ENCODE measurements at regions of chr2 and their contacts with region 1.

Region 1: GRCh38 chr2:54899576-54900200 is 150.6 kb downstream of the RTN4 start:
- DNase-seq: no peak
- ATAC-seq: peak; percentile 37 to 63 (median 47)
- H3K4me3 ChIP-seq: no peak overlapping the region
- H3K27ac ChIP-seq: peak overlapping the region; percentile 64
- H3K4me1 ChIP-seq: peaks cover 35% of the 10 kb centered on the region
- H3K27me3 ChIP-seq: no peaks in the 10 kb centered on the region
- CTCF ChIP-seq: peak; percentile 59

Region 2: GRCh38 chr2:54704688-54705605 is 194.7 kb before region 1 on chr2:
- intact Hi-C with region 1: no loop called
- DNase-seq: no peak
- ATAC-seq: peak; percentile 44 to 91 (median 74)
- H3K4me3 ChIP-seq: no peak overlapping the region
- H3K27ac ChIP-seq: no peak overlapping the region
- H3K4me1 ChIP-seq: no peaks in the 10 kb centered on the region
- H3K27me3 ChIP-seq: peaks cover 0 to 9% (median 4%) of the 10 kb centered on the region in 3 donors
- CTCF ChIP-seq: peak; percentile 62

Region 3: GRCh38 chr2:54845514-54845913 is 54.2 kb before region 1 on chr2:
- intact Hi-C with region 1: no loop called
- DNase-seq: no peak
- ATAC-seq: no peak
- H3K4me3 ChIP-seq: no peak overlapping the region
- H3K27ac ChIP-seq: no peak overlapping the region
- H3K4me1 ChIP-seq: no peaks in the 10 kb centered on the region
- H3K27me3 ChIP-seq: no peaks in the 10 kb centered on the region
- CTCF ChIP-seq: no peak

Region 4: GRCh38 chr2:54879598-54880332 is 19.9 kb before region 1 on chr2:
- intact Hi-C with region 1: no loop called
- DNase-seq: no peak
- ATAC-seq: peak; percentile 64 to 78 (median 70)
- H3K4me3 ChIP-seq: peak overlapping the region; percentile 15
- H3K27ac ChIP-seq: peak overlapping the region; percentile 53
- H3K4me1 ChIP-seq: peaks cover 10% of the 10 kb centered on the region
- H3K27me3 ChIP-seq: no peaks in the 10 kb centered on the region
- CTCF ChIP-seq: no peak

Region 5: DNA sequence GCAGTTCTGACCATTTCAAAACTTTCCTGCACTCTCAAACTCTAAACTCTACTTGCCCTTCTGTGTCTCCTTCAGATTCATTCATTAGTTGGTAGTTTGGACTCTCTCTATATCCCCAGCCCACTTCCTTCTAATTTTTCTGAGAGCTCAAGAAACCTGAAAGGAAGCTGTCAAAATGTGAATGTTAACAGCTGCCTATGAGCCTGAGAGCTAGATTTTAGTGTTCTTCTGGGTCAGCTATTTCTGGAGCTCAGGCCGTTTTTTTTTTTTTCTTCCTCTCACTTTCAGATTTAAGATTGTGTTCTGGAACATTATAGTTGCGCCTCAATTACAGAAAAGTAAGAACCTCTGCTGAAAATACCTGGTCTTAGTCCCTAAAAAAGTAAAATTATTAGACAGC is 77.5 kb after region 1 on chr2:
- intact Hi-C with region 1: loop called (anchors 5 to 10 kb)
- DNase-seq: no peak
- ATAC-seq: peak in 1 of 4 donors; percentile 16
- H3K4me3 ChIP-seq: peak overlapping the region; percentile 36
- H3K27ac ChIP-seq: peak overlapping the region; percentile 95
- H3K4me1 ChIP-seq: peaks cover 89% of the 10 kb centered on the region
- H3K27me3 ChIP-seq: no peaks in the 10 kb centered on the region
- CTCF ChIP-seq: no peak

Region 6: GRCh38 chr2:55010149-55010591 is 110.5 kb after region 1 on chr2:
- intact Hi-C with region 1: loop called (anchors 1 to 2 kb)
- DNase-seq: peak; percentile 33 to 70
- ATAC-seq: peak; percentile 85 to 89 (median 88)
- H3K4me3 ChIP-seq: peak overlapping the region; percentile 72
- H3K27ac ChIP-seq: peak overlapping the region; percentile 95
- H3K4me1 ChIP-seq: peaks cover 49% of the 10 kb centered on the region
- H3K27me3 ChIP-seq: no peaks in the 10 kb centered on the region
- CTCF ChIP-seq: no peak

Region 7: GRCh38 chr2:55014962-55015939 is 115.6 kb after region 1 on chr2:
- intact Hi-C with region 1: loop called (anchors 1 to 2 kb)
- DNase-seq: no peak
- ATAC-seq: peak; percentile 69 to 79 (median 72)
- H3K4me3 ChIP-seq: no peak overlapping the region
- H3K27ac ChIP-seq: peak overlapping the region; percentile 95
- H3K4me1 ChIP-seq: peaks cover 38% of the 10 kb centered on the region
- H3K27me3 ChIP-seq: no peaks in the 10 kb centered on the region
- CTCF ChIP-seq: peak; percentile 71

Region 8: DNA sequence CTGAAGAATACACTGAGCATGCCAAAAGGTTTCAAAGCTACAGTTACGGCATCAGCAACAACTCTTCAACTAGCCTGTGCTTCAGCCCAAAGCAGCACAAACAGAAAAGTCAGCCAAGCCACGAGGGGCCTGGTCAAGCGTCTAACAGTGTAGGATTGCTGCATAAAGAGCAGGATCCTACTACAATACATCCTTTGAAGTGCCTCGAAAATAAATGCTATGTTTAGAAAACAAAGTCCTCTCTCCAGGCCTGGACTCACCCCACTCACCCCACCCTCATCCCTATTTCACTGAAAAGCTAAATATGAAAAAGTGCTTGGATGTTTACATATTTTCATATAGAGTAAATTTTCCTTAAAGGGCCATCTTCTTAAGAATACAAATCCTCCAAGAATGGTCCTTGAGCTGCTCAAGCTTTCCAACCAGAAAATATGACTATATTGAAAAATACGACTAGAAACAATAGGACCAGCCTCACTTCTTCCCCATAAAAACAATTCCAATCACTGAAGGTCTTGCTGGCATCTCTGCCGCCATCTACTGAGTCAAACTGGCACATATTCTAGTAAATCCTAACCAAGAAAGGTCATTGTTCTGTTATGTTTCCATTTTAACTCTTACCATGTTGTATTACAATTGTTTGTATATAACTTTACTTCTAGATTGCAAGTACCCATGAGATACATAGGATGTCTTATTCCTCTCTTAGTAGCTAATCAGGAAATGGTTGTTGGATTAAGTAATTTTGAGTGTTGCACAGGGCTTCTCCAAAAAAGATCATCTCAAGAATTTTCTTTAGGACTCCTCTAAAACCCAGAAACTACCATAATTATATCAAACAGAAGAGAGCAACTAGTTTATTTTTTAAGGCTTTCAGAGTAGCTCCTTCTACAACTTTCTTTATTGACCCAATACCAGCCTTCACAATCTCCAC is 268.8 kb after region 1 on chr2:
- intact Hi-C with region 1: loop called (anchors 5 kb)
- DNase-seq: peak in 1 of 2 donors; percentile 54
- ATAC-seq: peak; percentile 54 to 85 (median 63)
- H3K4me3 ChIP-seq: no peak overlapping the region
- H3K27ac ChIP-seq: peak overlapping the region; percentile 21
- H3K4me1 ChIP-seq: no peaks in the 10 kb centered on the region
- H3K27me3 ChIP-seq: no peaks in the 10 kb centered on the region
- CTCF ChIP-seq: peak; percentile 65

Region 9: DNA sequence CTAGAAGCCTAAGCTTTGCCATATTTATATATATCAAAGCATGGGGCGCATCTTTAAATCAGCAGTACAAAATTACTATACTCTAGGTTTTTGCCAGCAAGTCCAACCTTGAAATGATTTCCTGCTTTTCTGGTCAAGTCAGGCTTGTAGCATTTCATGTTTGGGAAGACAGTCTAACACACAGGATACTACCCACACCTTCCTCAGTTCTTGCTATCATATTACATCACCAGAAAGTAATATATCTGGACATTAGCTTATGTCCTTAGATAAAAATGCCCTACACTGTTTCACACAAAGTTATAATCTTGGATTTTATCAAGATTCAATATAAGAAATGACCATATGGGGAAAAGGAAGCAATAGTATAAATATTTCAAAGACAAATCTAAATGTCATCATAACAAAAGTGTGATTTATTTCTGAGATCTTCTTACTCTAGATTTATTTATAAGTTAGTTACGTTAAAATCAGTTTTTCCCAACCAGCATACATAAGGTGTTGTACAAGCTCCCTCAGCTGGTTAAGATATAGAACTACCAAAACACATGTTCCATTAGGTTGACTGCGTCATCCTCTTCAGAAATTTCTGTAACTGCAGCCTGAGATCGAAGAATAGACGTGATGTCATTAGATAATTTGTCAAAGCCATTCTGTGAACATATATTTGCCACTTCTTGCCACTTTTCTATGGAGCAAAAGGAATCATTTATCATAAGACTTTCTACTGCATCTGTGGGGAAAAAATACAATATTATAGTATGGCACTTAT is 275.8 kb after region 1 on chr2:
- intact Hi-C with region 1: loop called in 1 of 2 experiments (anchors 5 kb)
- DNase-seq: no peak
- ATAC-seq: peak; percentile 80 to 96 (median 86)
- H3K4me3 ChIP-seq: no peak overlapping the region
- H3K27ac ChIP-seq: no peak overlapping the region
- H3K4me1 ChIP-seq: peaks cover 6% of the 10 kb centered on the region
- H3K27me3 ChIP-seq: no peaks in the 10 kb centered on the region
- CTCF ChIP-seq: peak; percentile 68